GM12878 (cell line): ENCODE measurements at regions of chr11 and their contacts with region 1.

Region 1: DNA sequence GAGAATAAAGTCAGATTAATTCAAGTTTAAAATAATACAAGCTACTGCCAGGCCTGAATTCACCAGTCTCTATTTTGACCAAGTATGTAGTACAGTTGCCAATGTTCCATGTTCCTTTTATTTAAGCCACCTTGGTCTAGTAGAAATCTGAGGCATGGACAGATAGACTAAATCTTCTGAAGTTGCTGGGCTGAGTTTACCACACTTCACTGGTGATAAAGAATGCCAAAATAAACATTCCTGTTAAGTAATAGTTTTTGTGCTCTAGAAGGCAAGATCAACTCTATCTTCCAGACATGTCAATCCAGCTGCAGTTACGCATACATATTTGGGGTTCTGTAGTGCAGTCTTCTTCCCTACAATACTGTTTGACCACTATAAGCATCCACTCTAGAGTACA is 83.9 kb upstream of the C11orf87 start:
- DNase-seq: no peak
- ATAC-seq: no peak
- H3K4me3 ChIP-seq: no peak overlapping the region
- H3K27ac ChIP-seq: no peak overlapping the region
- H3K4me1 ChIP-seq: no peaks in the 10 kb centered on the region
- H3K27me3 ChIP-seq: no peaks in the 10 kb centered on the region; a peak in 1 of 4 replicates
- CTCF ChIP-seq: no peak
- EP300 ChIP-seq: no peak
- POLR2A ChIP-seq: no peak
- RAD21 ChIP-seq: no peak

Region 2: GRCh38 chr11:109140857-109141515 is 197.1 kb before region 1 on chr11:
- CTCF ChIA-PET with region 1: no interaction called
- POLR2A ChIA-PET with region 1: no interaction called
- RAD21 ChIA-PET with region 1: no interaction called
- SMC1A ChIA-PET with region 1: no interaction called
- in situ Hi-C with region 1: no loop called
- intact Hi-C with region 1: loop called (anchors 1 kb)
- DNase-seq: no peak
- ATAC-seq: no peak
- H3K4me3 ChIP-seq: no peak overlapping the region
- H3K27ac ChIP-seq: no peak overlapping the region
- H3K4me1 ChIP-seq: no peaks in the 10 kb centered on the region
- H3K27me3 ChIP-seq: no peaks in the 10 kb centered on the region
- CTCF ChIP-seq: no peak
- EP300 ChIP-seq: no peak
- POLR2A ChIP-seq: no peak
- RAD21 ChIP-seq: no peak

Region 3: DNA sequence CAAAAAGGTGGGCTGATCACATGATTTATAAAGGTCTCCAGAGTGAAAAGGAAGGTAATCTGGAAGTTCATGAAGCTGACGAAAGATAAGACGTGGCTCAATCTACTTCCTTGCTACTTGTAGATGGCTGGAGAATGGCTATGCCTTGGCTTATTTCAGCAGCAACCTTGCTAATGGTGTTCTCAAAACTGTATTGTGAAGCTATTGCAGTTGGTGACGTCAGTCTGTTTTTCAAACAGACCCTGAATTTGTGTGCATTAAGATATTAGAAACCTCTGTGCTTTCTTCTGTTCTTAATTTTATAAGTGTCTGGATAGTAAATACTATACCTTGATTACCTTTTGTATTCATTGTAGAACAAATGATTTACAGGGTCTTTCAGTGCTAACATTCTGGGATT is 25.6 kb after region 1 on chr11:
- CTCF ChIA-PET with region 1: no interaction called
- POLR2A ChIA-PET with region 1: no interaction called
- RAD21 ChIA-PET with region 1: no interaction called
- SMC1A ChIA-PET with region 1: no interaction called
- in situ Hi-C with region 1: no loop called
- intact Hi-C with region 1: no loop called
- DNase-seq: no peak
- ATAC-seq: no peak
- H3K4me3 ChIP-seq: no peak overlapping the region
- H3K27ac ChIP-seq: no peak overlapping the region
- H3K4me1 ChIP-seq: no peaks in the 10 kb centered on the region
- H3K27me3 ChIP-seq: no peaks in the 10 kb centered on the region
- CTCF ChIP-seq: no peak
- EP300 ChIP-seq: no peak
- POLR2A ChIP-seq: no peak
- RAD21 ChIP-seq: no peak

Region 4: GRCh38 chr11:109435121-109435742 is 97.1 kb after region 1 on chr11:
- CTCF ChIA-PET with region 1: no interaction called
- POLR2A ChIA-PET with region 1: no interaction called
- RAD21 ChIA-PET with region 1: no interaction called
- SMC1A ChIA-PET with region 1: no interaction called
- in situ Hi-C with region 1: no loop called
- intact Hi-C with region 1: no loop called
- DNase-seq: no peak
- ATAC-seq: no peak
- H3K4me3 ChIP-seq: no peak overlapping the region
- H3K27ac ChIP-seq: no peak overlapping the region
- H3K4me1 ChIP-seq: no peaks in the 10 kb centered on the region
- H3K27me3 ChIP-seq: no peaks in the 10 kb centered on the region; a peak in 1 of 4 replicates
- CTCF ChIP-seq: no peak
- EP300 ChIP-seq: no peak
- POLR2A ChIP-seq: no peak
- RAD21 ChIP-seq: no peak